Right ventricle myocardium superior (tissue), 1 donor: ENCODE measurements at regions of chr18 and their contacts with region 1.

Region 1: DNA sequence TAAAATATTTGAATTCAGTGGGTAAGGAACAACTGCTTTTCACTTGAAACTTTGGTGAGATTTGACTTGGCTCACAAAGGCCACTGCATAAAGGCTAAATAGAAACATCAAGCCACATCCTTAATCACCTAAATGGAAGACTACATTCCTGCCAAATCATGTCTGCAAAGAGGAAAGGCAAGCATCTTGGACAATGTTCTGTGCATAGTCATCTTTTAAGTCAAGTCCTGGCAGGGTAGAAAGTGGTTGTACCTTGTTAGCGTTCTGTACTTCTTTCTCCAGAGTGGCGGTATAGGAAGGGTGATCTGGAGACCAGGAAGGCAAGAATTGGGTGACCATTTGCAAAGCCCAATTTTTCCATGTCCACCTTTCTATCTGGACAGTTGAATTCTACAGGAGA is 121.4 kb upstream of the SLC14A2 start:
- DNase-seq: no peak
- ATAC-seq: no peak

Region 2: GRCh38 chr18:45412577-45412976 is 81.3 kb before region 1 on chr18:
- intact Hi-C with region 1: no loop called
- DNase-seq: no peak
- ATAC-seq: no peak

Region 3: DNA sequence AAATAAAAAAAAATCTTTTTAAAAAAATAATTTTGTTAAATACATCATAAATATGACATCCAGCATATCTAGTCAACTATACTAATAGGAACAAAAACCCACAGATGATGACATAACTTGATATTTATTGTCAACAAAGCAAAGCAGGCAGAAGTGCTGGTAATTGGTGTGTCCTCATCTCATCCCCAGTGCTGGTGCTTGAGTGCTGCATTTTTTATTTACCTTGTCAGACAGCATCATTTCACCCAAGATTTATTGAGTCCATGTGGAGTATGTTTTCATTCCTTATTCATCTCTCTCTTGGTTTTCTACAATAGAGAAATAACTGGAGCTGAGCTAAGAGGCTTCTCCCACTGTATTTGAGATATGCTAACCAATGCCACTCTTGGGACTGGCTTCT is 70.2 kb before region 1 on chr18:
- intact Hi-C with region 1: loop called (anchors 10 kb)
- DNase-seq: no peak
- ATAC-seq: no peak

Region 4: GRCh38 chr18:45686891-45687611 is 193.2 kb after region 1 on chr18:
- intact Hi-C with region 1: no loop called
- DNase-seq: no peak
- ATAC-seq: peak; percentile 39